Activated B cell treated with CpG ODN at 0.5 μM for 24 hours (primary cell): ENCODE measurements at regions of chr20 and their contacts with region 1.

Region 1: GRCh38 chr20:15317546-15318232 is 980.3 kb upstream of the FLRT3 start:
- DNase-seq: no peak
- ATAC-seq: peak; percentile 91
- H3K4me3 Mint-ChIP-seq: peak overlapping the region; percentile 69
- H3K27ac Mint-ChIP-seq: peak overlapping the region; percentile 88
- H3K4me1 Mint-ChIP-seq: peaks cover 64% of the 10 kb centered on the region
- H3K27me3 Mint-ChIP-seq: no peaks in the 10 kb centered on the region
- CTCF ChIP-seq: no peak

Region 2: DNA sequence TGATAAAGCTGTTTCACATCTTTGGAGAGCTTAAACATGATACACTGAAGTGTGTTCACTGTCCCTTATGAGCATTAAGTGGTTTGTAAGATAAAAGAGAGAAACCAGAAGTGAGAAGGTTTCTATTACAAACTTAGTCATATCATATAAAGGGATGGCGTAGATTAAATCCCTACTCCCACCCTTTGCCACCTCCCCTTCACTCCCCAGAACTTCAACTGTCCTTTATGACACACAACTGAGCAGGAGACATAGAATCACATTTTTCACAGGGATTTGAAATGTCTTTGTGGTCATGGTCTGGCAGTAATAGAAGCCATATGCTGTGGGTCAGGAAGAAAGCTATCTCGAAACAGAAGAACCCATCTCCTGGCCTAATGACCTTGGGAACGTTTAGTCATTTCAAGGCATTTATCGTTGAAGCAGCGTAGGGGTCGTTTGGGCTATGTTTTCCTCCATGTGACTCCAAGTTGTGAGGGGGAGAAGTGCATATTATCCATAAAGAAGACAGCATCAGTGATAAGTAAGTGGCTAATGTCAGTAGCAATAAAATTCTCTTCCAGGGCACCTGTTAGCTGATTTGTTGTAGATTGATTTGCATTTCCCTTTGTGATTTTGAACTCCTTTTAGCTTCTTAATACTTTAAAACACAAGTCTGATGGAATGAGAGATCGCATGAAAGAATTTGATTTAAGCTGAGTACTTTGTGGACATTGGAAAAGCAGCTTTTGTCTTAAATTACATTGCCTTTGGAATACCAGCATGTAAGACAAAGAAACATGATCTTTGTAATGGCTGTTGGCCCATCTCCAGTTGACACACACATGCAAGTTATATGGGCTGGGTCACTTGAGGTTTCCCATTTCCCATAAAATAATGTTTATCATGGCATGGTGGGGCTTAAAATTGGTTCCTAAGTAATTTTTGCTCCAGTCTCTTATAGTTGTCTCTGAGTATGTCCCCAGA is 478.7 kb before region 1 on chr20:
- CTCF ChIA-PET with region 1: no interaction called
- POLR2A ChIA-PET with region 1: no interaction called
- intact Hi-C with region 1: loop called (anchors 10 kb)
- DNase-seq: no peak
- ATAC-seq: no peak
- H3K4me3 Mint-ChIP-seq: no peak overlapping the region
- H3K27ac Mint-ChIP-seq: no peak overlapping the region
- H3K4me1 Mint-ChIP-seq: no peaks in the 10 kb centered on the region
- H3K27me3 Mint-ChIP-seq: peaks cover 11% of the 10 kb centered on the region
- CTCF ChIP-seq: no peak

Region 3: DNA sequence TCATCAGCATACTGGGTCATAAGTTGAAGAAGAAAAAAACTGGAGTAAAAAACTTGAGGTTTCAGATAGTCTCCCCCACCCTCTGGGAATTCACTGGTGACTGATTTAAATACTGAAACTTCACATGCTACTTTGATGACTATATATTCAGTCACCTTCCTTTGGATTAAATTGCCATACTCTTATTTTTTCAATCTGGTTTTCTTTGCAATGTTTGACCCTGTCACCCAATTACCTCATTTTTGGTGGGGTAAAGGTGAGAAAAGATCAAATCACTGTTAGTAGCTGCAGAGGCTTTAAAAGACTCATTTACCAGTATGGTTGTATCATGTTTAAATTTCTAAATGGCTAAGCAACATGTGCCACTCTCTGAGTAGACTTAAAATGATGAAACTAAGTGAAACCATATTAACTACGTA is 117.5 kb before region 1 on chr20:
- CTCF ChIA-PET with region 1: no interaction called
- POLR2A ChIA-PET with region 1: no interaction called
- intact Hi-C with region 1: loop called (anchors 2 kb)
- DNase-seq: no peak
- ATAC-seq: peak; percentile 55
- H3K4me3 Mint-ChIP-seq: no peak overlapping the region
- H3K27ac Mint-ChIP-seq: peak overlapping the region; percentile 11
- H3K4me1 Mint-ChIP-seq: peaks cover 28% of the 10 kb centered on the region
- H3K27me3 Mint-ChIP-seq: no peaks in the 10 kb centered on the region
- CTCF ChIP-seq: no peak

Region 4: DNA sequence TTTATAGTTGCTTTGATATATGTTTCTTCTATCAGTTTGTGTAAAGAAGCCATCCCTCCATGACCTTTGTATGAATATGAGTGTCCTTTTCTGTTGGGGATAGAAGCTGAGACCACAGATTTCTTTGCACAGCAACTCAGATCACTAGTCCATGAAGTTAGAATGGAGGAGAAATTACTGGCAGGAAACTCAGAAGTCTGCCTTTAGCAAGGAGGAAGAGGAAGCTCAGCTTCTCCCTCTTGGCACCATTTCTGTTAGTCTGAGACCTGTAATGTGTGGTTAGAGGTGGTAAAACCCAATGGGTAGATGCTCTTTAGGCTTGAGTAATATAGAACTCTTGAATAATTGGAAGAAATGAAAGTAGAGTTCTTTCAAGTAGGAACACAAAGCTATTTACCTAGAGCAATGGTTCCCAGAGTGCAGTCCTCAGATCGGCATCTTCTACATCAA is 15.0 kb after region 1 on chr20:
- CTCF ChIA-PET with region 1: interaction called, 5 read pairs
- POLR2A ChIA-PET with region 1: interaction called, 12 read pairs
- intact Hi-C with region 1: loop called (anchors 2 kb)
- DNase-seq: no peak
- ATAC-seq: peak; percentile 68
- H3K4me3 Mint-ChIP-seq: peak overlapping the region; percentile 68
- H3K27ac Mint-ChIP-seq: peak overlapping the region; percentile 86
- H3K4me1 Mint-ChIP-seq: peaks cover 29% of the 10 kb centered on the region
- H3K27me3 Mint-ChIP-seq: no peaks in the 10 kb centered on the region
- CTCF ChIP-seq: no peak

Region 5: DNA sequence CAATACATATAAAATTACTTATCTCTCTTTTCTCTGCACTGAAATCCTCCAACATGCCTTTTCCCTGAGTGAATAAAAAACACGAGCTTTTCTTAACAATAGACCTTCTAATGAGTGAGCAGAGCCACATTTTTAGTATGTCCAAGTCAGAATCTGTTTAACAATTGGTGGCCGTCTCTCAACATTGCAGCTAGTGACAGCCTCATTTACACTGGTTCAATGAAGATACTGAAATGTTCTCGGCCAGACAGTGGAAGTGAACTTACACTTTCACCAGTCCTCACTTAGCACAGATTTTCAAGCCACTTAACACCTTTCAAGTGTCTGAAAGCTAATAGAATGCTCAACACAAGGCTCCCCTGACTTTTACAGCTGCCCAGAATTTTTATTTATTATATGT is 488.4 kb after region 1 on chr20:
- CTCF ChIA-PET with region 1: no interaction called
- POLR2A ChIA-PET with region 1: no interaction called
- intact Hi-C with region 1: loop called (anchors 5 kb)
- DNase-seq: no peak
- ATAC-seq: no peak
- H3K4me3 Mint-ChIP-seq: peak overlapping the region; percentile 17
- H3K27ac Mint-ChIP-seq: peak overlapping the region; percentile 30
- H3K4me1 Mint-ChIP-seq: peaks cover 41% of the 10 kb centered on the region
- H3K27me3 Mint-ChIP-seq: no peaks in the 10 kb centered on the region
- CTCF ChIP-seq: no peak

Region 6: DNA sequence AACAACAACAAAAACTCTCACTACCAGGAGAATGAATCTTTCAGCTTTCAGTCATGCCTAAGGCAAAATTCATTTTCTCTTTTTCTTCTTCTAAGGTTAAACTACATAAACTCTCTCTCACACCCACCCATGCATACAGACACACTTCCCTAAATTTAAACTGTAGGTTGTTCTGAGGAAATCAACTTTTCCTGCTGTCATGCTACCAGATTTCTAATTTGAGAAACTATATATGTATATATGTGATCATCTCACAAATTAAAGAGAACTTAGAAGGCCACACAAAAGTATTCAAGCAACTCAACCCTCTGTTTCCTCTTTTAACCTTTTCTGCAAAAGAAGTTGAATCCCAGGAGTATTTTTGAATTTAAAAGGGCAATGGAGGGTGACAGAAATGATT is 723.1 kb after region 1 on chr20:
- CTCF ChIA-PET with region 1: no interaction called
- POLR2A ChIA-PET with region 1: no interaction called
- intact Hi-C with region 1: loop called (anchors 5 kb)
- DNase-seq: no peak
- ATAC-seq: peak; percentile 80
- H3K4me3 Mint-ChIP-seq: peak overlapping the region; percentile 60
- H3K27ac Mint-ChIP-seq: peak overlapping the region; percentile 79
- H3K4me1 Mint-ChIP-seq: peaks cover 81% of the 10 kb centered on the region
- H3K27me3 Mint-ChIP-seq: no peaks in the 10 kb centered on the region
- CTCF ChIP-seq: no peak

Region 7: DNA sequence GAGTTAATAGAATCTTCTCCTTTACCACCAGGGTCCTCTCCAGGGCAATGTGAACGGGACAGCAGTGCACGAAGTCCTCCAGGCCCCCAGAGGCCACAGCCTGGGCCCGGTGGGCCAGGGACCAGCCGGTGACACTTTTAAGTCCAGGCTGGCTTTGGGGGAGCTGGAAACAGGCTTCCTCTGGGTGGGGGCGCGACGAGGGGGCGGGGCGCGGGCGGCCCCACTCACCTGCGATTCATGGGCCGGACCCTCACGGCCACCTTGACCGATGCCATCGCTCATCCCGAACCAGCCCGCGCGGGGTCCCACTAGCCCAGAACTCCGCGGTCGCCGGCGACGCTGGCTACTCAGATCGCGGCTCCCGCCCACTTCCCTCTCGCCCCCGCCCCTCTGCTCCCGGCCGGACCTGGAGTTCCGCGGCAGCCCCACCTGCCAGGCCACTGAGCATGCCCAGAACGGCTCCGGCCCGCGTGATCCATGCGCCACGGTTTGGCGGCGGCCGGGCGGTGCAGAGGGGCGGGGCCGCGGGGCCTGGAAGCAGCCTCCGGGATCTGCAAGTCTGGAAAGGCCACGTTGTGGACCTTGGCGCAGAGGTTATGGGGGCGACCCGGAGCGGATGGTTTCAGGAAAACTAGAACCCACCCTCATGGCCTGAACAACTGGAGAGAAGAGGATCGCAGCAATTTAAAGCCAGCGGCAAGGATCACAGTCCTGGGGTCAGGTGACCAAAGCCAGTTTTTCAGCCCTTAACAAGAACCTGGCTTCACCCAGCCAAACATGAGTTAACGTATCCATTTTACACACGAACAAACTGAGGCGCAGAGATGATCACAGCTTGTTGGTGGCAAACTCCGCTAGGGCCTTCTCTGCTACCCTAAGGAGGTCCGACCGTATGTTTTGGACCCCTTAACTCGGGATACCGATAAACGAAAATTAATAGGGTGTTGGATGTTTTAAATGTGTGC is 1255.6 kb after region 1 on chr20 and contains the start of gene KIF16B:
- CTCF ChIA-PET with region 1: no interaction called
- POLR2A ChIA-PET with region 1: no interaction called
- intact Hi-C with region 1: loop called (anchors 5 kb)
- DNase-seq: peak; percentile 93
- ATAC-seq: peak; percentile 90
- H3K4me3 Mint-ChIP-seq: peak within 1 kb of the TSS; percentile 94
- H3K27ac Mint-ChIP-seq: peak within 1 kb of the TSS; percentile 69
- H3K4me1 Mint-ChIP-seq: peaks cover 42% of the 10 kb centered on the region
- H3K27me3 Mint-ChIP-seq: no peaks in the 10 kb centered on the region
- CTCF ChIP-seq: no peak
- total RNA-seq, gene KIF16B: 7.2 and 9.1 TPM in 2 replicates